Activated CD8-positive, alpha-beta T cell treated with anti-CD3 and anti-CD28 coated beads for 36 hours (primary cell): ENCODE measurements at regions of chr11 and their contacts with region 1.

Region 1: DNA sequence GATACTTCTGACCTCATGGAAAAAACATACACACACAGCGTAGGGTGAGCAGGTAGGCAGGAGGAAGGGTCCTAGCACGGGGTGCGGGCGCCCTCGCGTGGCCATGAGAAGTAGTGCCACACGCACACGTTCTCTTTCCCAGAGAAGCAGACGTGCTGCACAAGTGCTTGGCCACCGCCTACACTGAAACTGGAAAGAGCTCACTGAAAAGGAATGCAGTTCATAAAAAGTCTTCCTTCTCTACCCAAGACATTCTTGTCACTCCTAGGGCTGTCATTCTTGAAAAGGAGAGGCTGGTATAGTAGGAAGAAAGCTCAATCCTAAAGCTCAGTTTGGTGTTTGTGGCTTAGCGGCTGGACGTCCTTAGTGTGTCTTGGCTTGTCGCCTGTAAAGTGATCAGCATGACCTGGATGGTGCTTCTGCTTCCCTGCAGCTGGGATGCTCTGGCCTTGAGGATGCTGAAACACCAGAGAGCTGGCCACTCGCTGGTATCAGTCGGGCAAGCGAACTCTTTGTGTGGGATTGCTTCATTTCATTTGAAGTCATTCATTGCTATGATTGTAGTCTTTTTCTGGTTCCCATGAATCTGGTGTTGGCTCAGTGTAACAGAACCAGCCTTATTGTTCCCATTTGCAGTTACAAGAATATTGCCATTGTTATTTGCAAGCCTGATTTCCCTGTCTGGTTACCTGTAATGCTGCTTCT is 303.8 kb downstream of the NTM start:
- DNase-seq: peak; percentile 69
- ATAC-seq: peak; percentile 79
- H3K4me3 Mint-ChIP-seq: no peak overlapping the region
- H3K27ac Mint-ChIP-seq: no peak overlapping the region
- H3K4me1 Mint-ChIP-seq: no peaks in the 10 kb centered on the region
- H3K27me3 Mint-ChIP-seq: peaks cover 1% of the 10 kb centered on the region
- CTCF ChIP-seq: peak; percentile 93

Region 2: GRCh38 chr11:130924770-130925169 is 749.4 kb before region 1 on chr11:
- CTCF ChIA-PET with region 1: no interaction called
- POLR2A ChIA-PET with region 1: no interaction called
- intact Hi-C with region 1: loop called (anchors 5 kb)
- DNase-seq: no peak
- ATAC-seq: no peak
- H3K4me3 Mint-ChIP-seq: no peak overlapping the region
- H3K27ac Mint-ChIP-seq: no peak overlapping the region
- H3K4me1 Mint-ChIP-seq: no peaks in the 10 kb centered on the region
- H3K27me3 Mint-ChIP-seq: peaks cover 7% of the 10 kb centered on the region
- CTCF ChIP-seq: no peak

Region 3: GRCh38 chr11:131064373-131064991 is 609.7 kb before region 1 on chr11:
- CTCF ChIA-PET with region 1: interaction called, 23 read pairs
- POLR2A ChIA-PET with region 1: no interaction called
- intact Hi-C with region 1: loop called (anchors 5 kb)
- DNase-seq: peak; percentile 48
- ATAC-seq: peak; percentile 34
- H3K4me3 Mint-ChIP-seq: no peak overlapping the region
- H3K27ac Mint-ChIP-seq: no peak overlapping the region
- H3K4me1 Mint-ChIP-seq: no peaks in the 10 kb centered on the region
- H3K27me3 Mint-ChIP-seq: peaks cover 6% of the 10 kb centered on the region
- CTCF ChIP-seq: peak; percentile 70

Region 4: DNA sequence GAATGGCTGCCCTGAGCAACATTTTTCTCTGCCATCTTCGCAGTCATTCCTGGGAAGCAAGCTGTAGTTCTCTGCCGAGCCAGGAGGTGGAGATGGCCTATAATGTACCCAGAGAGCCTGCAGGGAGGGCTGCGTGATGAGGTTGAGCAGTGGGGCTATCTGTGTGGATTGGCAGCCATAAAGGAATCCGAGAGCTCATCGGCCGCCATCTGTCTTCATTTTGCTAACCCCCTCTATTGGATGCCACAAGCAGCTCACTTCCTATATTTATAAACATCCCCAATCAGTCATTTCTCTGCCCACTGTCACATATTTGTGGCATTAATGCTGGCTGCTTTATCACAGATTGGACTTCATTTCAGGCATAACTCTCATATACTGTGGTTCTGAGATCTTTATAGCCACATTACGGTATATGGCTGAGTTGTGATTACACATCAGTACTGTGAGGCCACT is 94.2 kb before region 1 on chr11:
- CTCF ChIA-PET with region 1: interaction called, 12 read pairs
- POLR2A ChIA-PET with region 1: no interaction called
- intact Hi-C with region 1: no loop called
- DNase-seq: peak; percentile 5
- ATAC-seq: no peak
- H3K4me3 Mint-ChIP-seq: no peak overlapping the region
- H3K27ac Mint-ChIP-seq: no peak overlapping the region
- H3K4me1 Mint-ChIP-seq: no peaks in the 10 kb centered on the region
- H3K27me3 Mint-ChIP-seq: peaks cover 5% of the 10 kb centered on the region
- CTCF ChIP-seq: peak; percentile 25

Region 5: DNA sequence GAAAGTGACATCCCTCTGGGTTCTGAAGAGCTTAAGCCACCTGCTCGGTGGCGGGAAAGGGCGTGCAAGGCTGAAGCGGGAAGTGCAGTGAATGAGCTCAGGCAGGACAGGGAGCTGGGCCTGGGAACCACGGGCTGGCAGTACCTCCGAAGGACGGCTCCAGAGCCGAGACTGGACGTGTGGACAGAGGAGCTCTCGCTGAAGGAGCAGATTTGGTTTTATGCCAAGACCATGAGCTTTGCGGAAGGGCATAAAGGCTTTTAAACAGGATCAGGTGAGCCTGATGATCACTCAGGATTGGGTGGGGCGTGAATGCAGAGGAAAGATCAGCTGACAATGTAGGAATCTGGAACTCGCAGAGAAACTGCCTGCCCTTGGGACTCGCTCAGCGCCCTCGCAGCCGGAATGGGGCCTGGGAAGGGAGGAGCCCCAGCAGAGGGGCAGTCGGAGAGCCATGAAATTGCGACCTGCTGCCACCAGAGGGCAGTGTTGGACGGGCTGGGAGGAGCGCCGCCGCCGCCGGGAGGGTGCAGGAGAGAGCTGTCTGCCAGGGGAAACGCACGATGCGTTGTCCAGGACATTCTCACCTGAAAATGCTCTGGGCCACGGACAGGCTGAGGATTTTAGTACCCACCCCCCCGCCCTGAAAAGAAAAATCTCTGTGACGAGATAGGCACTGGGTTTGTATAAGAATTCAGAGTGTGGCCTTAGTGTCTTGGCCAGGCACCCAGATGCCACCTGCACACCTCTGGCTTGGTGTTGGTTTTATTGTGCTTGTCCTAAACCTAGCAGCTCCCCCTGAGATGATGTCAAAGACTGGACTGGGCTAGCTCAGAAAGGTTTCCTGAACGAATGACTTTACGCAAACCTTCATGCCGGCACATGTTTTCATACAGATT is 20.6 kb after region 1 on chr11:
- CTCF ChIA-PET with region 1: interaction called, 14 read pairs
- POLR2A ChIA-PET with region 1: no interaction called
- intact Hi-C with region 1: no loop called
- DNase-seq: peak; percentile 69
- ATAC-seq: peak; percentile 83
- H3K4me3 Mint-ChIP-seq: no peak overlapping the region
- H3K27ac Mint-ChIP-seq: no peak overlapping the region
- H3K4me1 Mint-ChIP-seq: no peaks in the 10 kb centered on the region
- H3K27me3 Mint-ChIP-seq: peaks cover 34% of the 10 kb centered on the region
- CTCF ChIP-seq: peak; percentile 83